ENCODE measurements at regions of chr11 and their contacts with region 1.

Region 1: DNA sequence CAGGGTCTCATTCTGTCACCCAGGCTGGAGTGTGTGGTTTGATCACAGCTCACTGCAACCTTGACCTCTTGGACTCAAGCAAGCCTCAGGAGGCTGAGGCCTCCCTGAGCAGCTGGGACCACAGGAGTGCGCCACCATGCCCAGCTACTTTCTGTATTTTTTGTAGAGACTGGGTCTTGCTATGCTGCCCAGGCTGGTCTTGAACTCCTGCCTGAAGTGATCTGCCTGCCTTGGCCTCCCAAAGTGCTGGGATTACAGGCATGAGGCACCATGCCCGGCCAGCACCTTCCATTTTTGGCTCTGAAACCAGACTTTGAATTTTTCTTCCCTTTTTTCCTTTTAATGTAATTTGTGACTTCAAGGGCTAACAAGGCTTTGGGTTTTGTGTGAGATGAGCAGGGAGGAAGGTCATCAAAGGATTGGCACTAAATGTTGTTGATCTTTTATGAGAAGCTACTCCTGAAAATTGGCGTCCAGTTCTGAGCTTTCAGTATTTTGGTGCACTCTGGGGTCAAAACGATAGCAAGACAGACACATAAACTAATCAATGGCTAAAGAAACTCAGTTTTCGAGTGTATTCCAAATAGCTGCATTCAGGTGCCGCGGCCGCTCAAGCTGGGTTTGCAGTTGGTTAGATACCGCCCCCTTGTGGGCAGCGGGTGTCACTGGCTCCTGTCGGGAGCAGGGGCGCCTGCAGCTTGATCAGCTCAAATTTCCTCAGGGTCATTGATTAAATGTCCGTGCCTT is 51.9 kb upstream of the CLMP start:
- DNase-seq: peak; percentile 47 to 88 (median 76)
- ATAC-seq: peak; percentile 83 to 90 (median 87)
- H3K4me3 ChIP-seq: no peak overlapping the region
- H3K4me3 Mint-ChIP-seq: no peak overlapping the region
- H3K27ac ChIP-seq: no peak overlapping the region
- H3K27ac Mint-ChIP-seq: no peak overlapping the region
- H3K4me1 ChIP-seq: peaks cover 0 to 4% of the 10 kb centered on the region in 2 experiments
- H3K4me1 Mint-ChIP-seq: peaks cover 0 to 6% (median 4%) of the 10 kb centered on the region in 3 donors
- H3K27me3 ChIP-seq: peaks cover 0 to 5% of the 10 kb centered on the region in 2 experiments
- H3K27me3 Mint-ChIP-seq: peaks cover 10 to 14% of the 10 kb centered on the region in 2 donors

Region 2: GRCh38 chr11:122863704-122864326 is 383.1 kb before region 1 on chr11:
- CTCF ChIA-PET with region 1: interaction called in 1 of 2 experiments, 12 read pairs
- POLR2A ChIA-PET with region 1: no interaction called
- DNase-seq: peak in 21 of 35 experiments; percentile 10 to 61 (median 34)
- ATAC-seq: no peak
- H3K4me3 ChIP-seq: no peak overlapping the region
- H3K4me3 Mint-ChIP-seq: no peak overlapping the region
- H3K27ac ChIP-seq: no peak overlapping the region
- H3K27ac Mint-ChIP-seq: no peak overlapping the region
- H3K4me1 ChIP-seq: no peaks in the 10 kb centered on the region
- H3K4me1 Mint-ChIP-seq: no peaks in the 10 kb centered on the region
- H3K27me3 ChIP-seq: no peaks in the 10 kb centered on the region
- H3K27me3 Mint-ChIP-seq: peaks cover 0 to 7% of the 10 kb centered on the region in 2 donors

Region 3: GRCh38 chr11:123103326-123103980 is 143.5 kb before region 1 on chr11:
- CTCF ChIA-PET with region 1: interaction called, 9 to 26 read pairs
- POLR2A ChIA-PET with region 1: interaction called, 3 to 5 read pairs
- DNase-seq: peak in 29 of 35 experiments; percentile 2 to 67 (median 15)
- ATAC-seq: peak; percentile 60 to 81 (median 78)
- H3K4me3 ChIP-seq: no peak overlapping the region
- H3K4me3 Mint-ChIP-seq: no peak overlapping the region
- H3K27ac ChIP-seq: no peak overlapping the region
- H3K27ac Mint-ChIP-seq: peak overlapping the region; percentile 54 to 64
- H3K4me1 ChIP-seq: peaks cover 3 to 19% of the 10 kb centered on the region in 2 experiments
- H3K4me1 Mint-ChIP-seq: peaks cover 25 to 42% (median 31%) of the 10 kb centered on the region in 3 donors
- H3K27me3 ChIP-seq: peaks cover 0 to 6% of the 10 kb centered on the region in 2 experiments
- H3K27me3 Mint-ChIP-seq: no peaks in the 10 kb centered on the region

Region 4: DNA sequence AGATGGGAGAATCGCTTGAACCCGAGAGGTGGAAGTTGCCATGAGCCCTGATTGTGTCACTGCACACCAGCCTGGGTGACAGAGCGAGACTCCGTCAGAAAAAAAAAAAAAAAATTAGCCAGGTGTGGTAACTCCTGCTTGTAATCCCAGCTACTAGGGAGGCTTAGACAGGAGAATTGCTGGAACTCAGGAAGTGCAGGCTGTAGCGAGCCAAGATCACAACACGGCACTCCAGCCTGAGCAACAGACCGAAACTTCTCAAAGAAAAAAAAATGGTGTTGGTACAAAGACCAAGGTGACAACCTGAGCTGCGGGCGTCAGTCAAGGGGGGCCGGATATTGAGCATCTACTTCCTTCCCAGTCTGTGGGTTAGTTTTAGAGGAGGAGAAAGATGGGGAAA is 136.6 kb before region 1 on chr11:
- CTCF ChIA-PET with region 1: interaction called, 20 to 40 read pairs
- POLR2A ChIA-PET with region 1: no interaction called
- DNase-seq: peak in 1 of 35 experiments; percentile 19
- ATAC-seq: peak in 1 of 4 experiments; percentile 35
- H3K4me3 ChIP-seq: no peak overlapping the region
- H3K4me3 Mint-ChIP-seq: peak overlapping the region; percentile 4 to 39 (median 34)
- H3K27ac ChIP-seq: no peak overlapping the region
- H3K27ac Mint-ChIP-seq: peak overlapping the region in 1 of 2 donors; percentile 61
- H3K4me1 ChIP-seq: no peaks in the 10 kb centered on the region
- H3K4me1 Mint-ChIP-seq: peaks cover 7 to 8% (median 7%) of the 10 kb centered on the region in 3 donors
- H3K27me3 ChIP-seq: peaks cover 0 to 8% of the 10 kb centered on the region in 2 experiments
- H3K27me3 Mint-ChIP-seq: no peaks in the 10 kb centered on the region

Region 5: DNA sequence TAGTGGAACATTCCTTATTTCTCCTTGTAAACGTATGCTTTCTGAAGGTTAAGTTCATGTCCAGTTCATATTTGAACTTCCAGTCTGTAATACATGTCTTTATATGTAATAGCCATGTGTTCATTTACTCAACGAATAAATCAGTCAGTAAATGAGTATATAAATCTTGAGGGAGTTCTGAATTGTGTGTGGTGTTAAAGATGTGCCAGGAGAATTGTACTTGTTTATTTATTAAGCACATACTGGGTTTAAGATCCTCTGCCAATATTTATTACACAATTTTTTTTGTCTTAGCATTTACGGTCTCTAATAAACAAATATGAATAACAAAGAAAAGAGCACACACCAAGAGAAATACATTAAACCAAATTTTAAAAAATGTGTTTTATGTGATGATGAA is 25.3 kb before region 1 on chr11:
- CTCF ChIA-PET with region 1: no interaction called
- POLR2A ChIA-PET with region 1: no interaction called
- DNase-seq: no peak
- ATAC-seq: no peak
- H3K4me3 ChIP-seq: no peak overlapping the region
- H3K4me3 Mint-ChIP-seq: no peak overlapping the region
- H3K27ac ChIP-seq: no peak overlapping the region
- H3K27ac Mint-ChIP-seq: no peak overlapping the region
- H3K4me1 ChIP-seq: no peaks in the 10 kb centered on the region
- H3K4me1 Mint-ChIP-seq: no peaks in the 10 kb centered on the region
- H3K27me3 ChIP-seq: peaks cover 0 to 7% of the 10 kb centered on the region in 2 experiments
- H3K27me3 Mint-ChIP-seq: peaks cover 17 to 21% of the 10 kb centered on the region in 2 donors

Region 6: GRCh38 chr11:123233280-123233974 is 13.5 kb before region 1 on chr11:
- CTCF ChIA-PET with region 1: interaction called, 7 to 16 read pairs
- POLR2A ChIA-PET with region 1: no interaction called
- DNase-seq: peak in 3 of 35 experiments; percentile 3 to 27 (median 21)
- ATAC-seq: peak; percentile 27 to 62 (median 56)
- H3K4me3 ChIP-seq: no peak overlapping the region
- H3K4me3 Mint-ChIP-seq: peak overlapping the region; percentile 14 to 62 (median 31)
- H3K27ac ChIP-seq: peak overlapping the region; percentile 48
- H3K27ac Mint-ChIP-seq: peak overlapping the region; percentile 80 to 93
- H3K4me1 ChIP-seq: peaks cover 3 to 7% of the 10 kb centered on the region in 2 experiments
- H3K4me1 Mint-ChIP-seq: peaks cover 16 to 26% (median 19%) of the 10 kb centered on the region in 3 donors
- H3K27me3 ChIP-seq: peaks cover 0 to 2% of the 10 kb centered on the region in 2 experiments
- H3K27me3 Mint-ChIP-seq: peaks cover 0 to 2% of the 10 kb centered on the region in 2 donors

Region 7: GRCh38 chr11:123261345-123262106 is 14.6 kb after region 1 on chr11:
- CTCF ChIA-PET with region 1: interaction called, 4 to 14 read pairs
- POLR2A ChIA-PET with region 1: no interaction called
- DNase-seq: peak; percentile 7 to 67 (median 40)
- ATAC-seq: peak; percentile 63 to 85 (median 68)
- H3K4me3 ChIP-seq: peak overlapping the region in 1 of 2 donors; percentile 1
- H3K4me3 Mint-ChIP-seq: peak overlapping the region in 2 of 3 donors; percentile 38 to 51
- H3K27ac ChIP-seq: no peak overlapping the region
- H3K27ac Mint-ChIP-seq: no peak overlapping the region
- H3K4me1 ChIP-seq: peaks cover 0 to 8% of the 10 kb centered on the region in 2 experiments
- H3K4me1 Mint-ChIP-seq: peaks cover 4 to 10% (median 8%) of the 10 kb centered on the region in 3 donors
- H3K27me3 ChIP-seq: peaks cover 0 to 25% of the 10 kb centered on the region in 2 experiments
- H3K27me3 Mint-ChIP-seq: peaks cover 24 to 27% of the 10 kb centered on the region in 2 donors

Region 8: DNA sequence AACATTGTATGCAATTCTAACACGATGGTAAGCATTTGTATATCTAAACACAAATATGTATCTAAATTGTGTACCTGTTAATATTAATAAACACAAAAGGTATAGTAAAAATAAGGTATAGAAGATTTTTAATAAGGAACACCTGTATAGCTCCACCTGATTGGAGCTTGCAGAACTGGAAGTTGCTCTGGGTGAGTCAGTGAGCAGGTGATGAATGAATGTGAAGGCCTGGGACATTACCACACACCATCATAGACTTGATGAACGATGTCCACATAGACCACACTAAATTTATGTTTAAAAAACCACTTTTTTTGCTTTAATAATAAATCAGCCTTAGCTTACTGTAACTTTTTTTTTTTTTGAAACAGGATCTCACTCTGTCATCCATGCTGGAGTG is 45.7 kb after region 1 on chr11:
- CTCF ChIA-PET with region 1: interaction called in 1 of 2 experiments, 10 read pairs
- POLR2A ChIA-PET with region 1: no interaction called
- DNase-seq: no peak
- ATAC-seq: no peak
- H3K4me3 ChIP-seq: no peak overlapping the region
- H3K4me3 Mint-ChIP-seq: no peak overlapping the region
- H3K27ac ChIP-seq: no peak overlapping the region
- H3K27ac Mint-ChIP-seq: no peak overlapping the region
- H3K4me1 ChIP-seq: no peaks in the 10 kb centered on the region
- H3K4me1 Mint-ChIP-seq: no peaks in the 10 kb centered on the region
- H3K27me3 ChIP-seq: peaks cover 0 to 6% of the 10 kb centered on the region in 2 experiments
- H3K27me3 Mint-ChIP-seq: peaks cover 5% of the 10 kb centered on the region in 2 donors